ENCODE measurements at regions of chr11 and their contacts with region 1.

Region 1: DNA sequence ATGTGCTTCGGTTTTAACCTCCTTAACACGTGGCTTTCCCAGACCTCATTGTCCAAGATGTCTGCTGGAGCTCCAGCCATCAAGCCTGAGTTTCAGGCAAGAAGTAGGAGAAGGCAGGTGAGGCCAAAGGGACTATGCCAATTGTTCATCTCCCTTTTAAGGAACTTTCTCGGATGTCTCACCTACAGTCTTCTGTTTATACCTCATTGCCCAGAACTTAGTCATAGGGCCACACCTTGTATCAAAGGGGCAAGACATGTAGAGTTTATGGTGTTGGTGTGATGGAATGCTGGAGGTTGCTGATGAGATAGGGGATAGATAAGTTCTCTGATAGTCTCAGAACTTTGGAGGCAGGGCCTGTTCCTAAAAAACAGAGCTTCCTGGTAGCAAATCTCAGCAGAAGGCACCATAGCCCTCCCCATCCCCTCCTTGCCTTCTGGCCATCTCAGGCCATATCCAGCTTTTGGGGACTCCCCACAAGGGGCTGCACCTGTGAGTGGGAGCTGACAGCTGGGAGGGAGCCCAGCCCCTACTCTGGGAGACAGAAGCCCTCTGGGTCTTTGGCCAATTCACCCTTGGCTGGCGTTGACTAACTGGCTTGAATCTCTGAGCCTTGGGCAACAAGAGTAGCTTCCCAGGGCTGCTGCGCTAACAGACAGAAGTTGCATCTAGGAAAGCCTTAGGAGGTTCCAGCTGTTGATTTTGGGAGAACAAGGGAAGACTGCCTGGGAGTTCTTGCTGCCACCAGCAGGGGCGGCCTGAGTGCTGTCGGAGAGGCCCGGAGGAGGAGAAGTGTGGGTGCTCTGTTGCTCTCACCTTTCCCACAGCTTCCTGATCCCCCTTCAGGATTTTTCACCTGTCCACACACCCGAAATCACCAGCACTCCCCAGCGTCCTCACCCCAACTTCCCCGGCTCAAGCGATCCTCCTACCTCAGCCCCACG is 149.8 kb upstream of the THY1 start:
- DNase-seq: no peak
- H3K4me3 ChIP-seq: no peak overlapping the region
- H3K27ac ChIP-seq: no peak overlapping the region
- H3K4me1 ChIP-seq: peaks cover 3 to 17% (median 9%) of the 10 kb centered on the region in 4 experiments
- H3K27me3 ChIP-seq: no peaks in the 10 kb centered on the region

Region 2: DNA sequence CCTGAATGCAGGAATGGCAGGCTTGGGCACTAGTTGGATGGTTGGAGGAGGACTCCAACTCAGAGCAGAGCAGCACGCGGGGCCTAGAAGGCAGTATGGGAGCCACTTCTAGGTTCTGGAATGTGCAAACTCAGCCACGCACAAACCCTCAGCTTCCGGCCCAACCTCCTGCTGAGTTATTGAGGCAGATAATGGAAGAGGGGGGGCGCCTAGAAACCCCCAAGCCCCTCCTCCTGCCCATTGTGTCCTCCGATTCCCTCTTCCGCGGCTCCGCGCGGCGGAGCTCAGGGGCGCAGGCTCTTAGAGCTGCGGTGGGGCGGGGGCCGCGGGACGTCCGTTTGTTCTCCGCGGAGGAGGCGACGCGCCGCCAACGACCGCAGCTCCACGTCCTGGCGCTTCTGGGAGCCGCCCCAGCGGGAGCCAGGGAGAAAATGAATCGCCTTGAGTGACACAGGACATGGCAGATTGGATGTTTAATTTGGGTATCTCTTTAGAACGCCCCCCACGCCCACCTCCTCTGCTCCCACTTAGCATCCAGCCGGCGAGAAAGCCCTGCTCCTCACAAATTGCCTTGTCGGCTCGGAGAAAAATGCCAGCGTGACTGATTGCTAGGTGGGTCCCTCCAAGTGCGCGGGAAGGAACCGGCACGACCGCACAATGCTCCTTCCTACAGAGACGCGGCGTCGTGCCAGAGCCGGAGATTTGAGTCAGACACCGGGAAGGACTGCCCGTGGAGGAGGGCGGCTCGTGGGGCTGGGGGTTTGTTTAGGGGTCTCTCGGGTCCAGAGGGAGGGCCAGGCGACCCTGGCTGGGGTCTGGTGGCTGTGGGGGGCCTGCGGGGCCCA is 11.7 kb after region 1 on chr11:
- CTCF ChIA-PET with region 1: interaction called, 10 read pairs
- POLR2A ChIA-PET with region 1: no interaction called
- DNase-seq: peak; percentile 90 to 94 (median 93)
- H3K4me3 ChIP-seq: peak overlapping the region; percentile 30 to 75 (median 60)
- H3K27ac ChIP-seq: peak overlapping the region in 1 of 2 experiments; percentile 64
- H3K4me1 ChIP-seq: peaks cover 0 to 17% (median 16%) of the 10 kb centered on the region in 4 experiments
- H3K27me3 ChIP-seq: peaks cover 0 to 15% (median 12%) of the 10 kb centered on the region in 5 experiments

Region 3: DNA sequence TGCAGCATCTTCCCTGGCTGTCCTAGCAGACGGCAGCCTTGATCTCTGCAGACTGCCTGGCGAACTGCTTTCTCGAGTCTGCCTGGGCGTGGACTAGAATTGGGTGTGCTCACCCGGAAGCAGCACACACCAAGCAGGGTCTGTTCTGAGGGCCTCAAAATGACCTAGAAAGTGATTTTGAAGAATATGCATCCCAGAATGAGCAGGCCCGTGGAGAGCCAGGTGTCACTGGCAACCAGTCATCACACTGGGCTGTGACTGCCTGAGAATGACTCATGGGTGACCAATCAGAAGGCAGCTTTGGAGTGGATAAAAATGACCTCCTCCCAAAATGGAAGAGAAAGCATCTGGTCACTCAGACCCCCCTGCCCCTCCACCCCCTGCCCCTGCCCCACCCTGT is 271.1 kb after region 1 on chr11:
- CTCF ChIA-PET with region 1: no interaction called
- POLR2A ChIA-PET with region 1: no interaction called
- DNase-seq: no peak
- H3K4me3 ChIP-seq: no peak overlapping the region
- H3K27ac ChIP-seq: no peak overlapping the region
- H3K4me1 ChIP-seq: no peaks in the 10 kb centered on the region
- H3K27me3 ChIP-seq: peaks cover 0 to 30% (median 8%) of the 10 kb centered on the region in 5 experiments

Measured in common myeloid progenitor, CD34-positive (primary cell).